ENCODE measurements at regions of chr2 and their contacts with region 1.

Region 1: DNA sequence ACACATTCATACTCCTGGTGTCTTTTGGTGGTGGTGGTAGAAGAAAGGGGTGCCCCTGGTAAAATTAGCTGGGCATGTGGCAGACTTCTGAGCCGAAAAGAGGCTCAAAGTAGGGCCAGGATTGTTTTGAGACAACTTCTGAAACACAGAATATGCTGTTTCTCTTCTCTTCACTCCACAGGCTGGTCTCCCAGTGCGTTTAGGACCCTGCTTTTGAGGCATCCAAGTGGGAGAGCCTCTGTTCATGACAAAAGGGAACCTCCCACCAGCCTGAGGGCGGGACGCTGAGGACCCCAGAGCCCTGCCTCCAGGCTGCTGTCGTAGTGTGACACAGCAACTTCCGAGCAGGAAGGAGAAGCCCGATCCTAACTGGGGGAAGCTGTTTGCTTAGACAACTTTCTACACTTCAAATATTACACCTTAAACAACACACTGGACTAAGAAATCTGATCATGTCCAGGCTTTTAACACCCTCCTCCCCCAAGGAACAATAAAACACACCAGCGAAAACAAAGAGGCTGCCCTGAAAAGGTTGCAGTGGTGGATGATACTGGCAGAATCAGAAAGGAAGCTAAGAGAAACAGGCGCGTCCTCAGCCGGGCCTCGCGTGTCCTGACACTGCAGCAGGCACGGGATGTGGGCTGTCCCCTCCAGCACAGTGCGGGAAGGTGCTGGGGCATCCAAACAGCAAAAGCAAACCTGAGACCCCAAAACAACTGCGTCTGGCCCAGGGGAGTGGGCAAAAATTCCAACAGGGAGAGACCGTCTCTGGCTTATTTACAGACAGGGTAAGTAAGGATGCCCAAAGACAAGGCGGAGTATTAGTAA is 9.3 kb downstream of the SERTAD2 start:
- DNase-seq: peak; percentile 91

Region 2: DNA sequence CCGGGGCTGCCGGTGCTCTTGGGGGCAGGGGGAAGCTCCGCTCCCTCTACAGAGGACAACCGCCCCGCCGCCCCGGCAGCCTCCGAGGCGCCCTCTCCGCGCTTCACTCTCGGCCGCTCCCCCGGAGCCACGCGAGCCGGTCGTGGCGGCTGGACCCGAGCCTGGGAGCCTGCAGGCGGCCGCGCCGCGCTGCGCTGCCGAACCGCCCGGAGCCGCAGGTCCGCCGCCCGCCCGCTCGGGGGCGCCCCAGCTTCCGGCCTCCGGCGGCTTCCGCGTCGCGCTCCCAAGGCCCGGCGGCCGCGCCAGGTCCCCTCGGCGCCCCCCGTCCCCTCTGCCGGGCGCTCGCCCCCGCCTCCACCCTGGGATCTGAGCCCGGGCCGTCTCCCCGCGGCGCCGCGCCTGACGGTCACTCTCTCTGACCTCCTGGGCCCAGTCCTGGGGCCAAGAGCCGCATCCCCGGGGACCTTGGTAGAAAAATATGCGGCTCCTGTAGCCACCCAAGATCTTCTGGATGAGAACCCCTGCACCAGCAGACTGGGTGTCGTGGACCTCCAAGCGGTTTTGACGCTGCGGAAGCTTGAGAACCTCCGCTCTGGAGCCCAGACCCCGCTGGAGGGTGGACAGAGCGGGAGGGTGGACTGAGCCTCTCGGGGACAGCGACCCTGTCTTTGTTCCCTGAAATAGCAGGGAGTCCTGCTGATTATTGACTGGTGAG is 35.0 kb before region 1 on chr2:
- intact Hi-C with region 1: loop called (anchors 2 kb)
- DNase-seq: peak; percentile 86

Region 3: DNA sequence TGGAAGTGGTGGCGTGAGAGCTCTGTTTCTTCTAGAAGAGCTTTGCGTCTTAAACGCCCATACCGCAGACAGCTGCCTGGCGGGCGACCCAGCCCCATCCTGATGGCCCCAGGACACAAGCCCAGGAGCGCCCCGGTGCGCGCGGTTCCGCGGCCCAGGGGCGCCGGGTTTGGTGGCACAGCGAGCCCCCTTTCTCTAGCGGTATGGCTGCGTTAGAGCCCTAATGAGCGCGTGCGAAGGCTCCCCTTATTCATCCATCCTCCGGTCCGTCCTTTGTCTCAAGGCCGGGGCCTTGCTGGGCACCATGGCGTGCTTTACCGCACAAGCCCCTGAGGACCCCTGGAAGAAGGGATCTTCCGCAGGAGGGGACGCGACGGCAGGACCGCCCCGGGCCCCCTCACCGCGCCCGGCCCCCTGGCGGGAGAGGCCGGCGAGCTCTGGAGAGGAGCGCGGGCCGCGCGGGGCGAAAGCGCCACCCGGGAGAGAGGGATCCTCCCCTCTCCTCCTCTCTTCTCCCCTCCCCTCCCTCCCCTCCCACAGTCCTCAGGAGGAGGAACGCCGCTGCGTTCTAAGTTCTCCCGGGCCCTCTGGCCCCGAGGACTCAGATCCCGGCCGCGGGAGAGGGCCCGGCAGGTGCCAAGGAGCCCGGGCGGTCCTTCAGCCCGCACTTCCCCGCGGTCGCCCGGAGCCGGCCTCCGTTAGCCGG is 344.2 kb after region 1 on chr2:
- intact Hi-C with region 1: loop called (anchors 10 kb)
- DNase-seq: peak; percentile 89

Region 4: DNA sequence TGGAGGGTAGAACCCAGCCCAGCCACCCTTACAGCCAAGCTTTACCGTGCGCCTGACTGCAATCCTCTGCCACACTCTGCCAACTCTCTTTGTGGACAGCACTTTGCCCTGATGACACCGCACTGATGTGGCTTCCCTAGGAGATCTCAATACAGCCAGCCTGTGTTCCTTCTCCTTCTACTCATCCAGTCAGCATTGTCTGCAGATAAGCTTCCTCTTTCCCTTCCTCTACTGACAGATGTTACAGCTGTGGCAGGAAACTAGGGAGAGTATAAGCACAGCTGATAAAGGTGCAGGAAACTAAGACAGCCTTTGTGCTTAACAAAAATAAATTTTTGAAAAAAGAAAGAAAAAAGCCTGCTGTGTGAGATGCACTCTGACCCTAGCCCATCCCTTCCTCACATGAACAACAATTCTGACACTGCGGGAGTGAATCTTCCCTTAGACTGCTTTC is 436.9 kb after region 1 on chr2:
- intact Hi-C with region 1: no loop called
- DNase-seq: no peak